ENCODE measurements at regions of chr21 and their contacts with region 1.

Region 1: GRCh38 chr21:38505654-38506515 is 7.6 kb upstream of the ERG start:
- DNase-seq: no peak
- ATAC-seq: peak; percentile 86
- H3K4me3 ChIP-seq: no peak overlapping the region
- H3K27ac ChIP-seq: no peak overlapping the region
- H3K4me1 ChIP-seq: no peaks in the 10 kb centered on the region
- H3K27me3 ChIP-seq: no peaks in the 10 kb centered on the region
- CTCF ChIP-seq: peak; percentile 55 to 65 (median 56)
- EP300 ChIP-seq: no peak
- POLR2A ChIP-seq: no peak
- RAD21 ChIP-seq: peak; percentile 65

Region 2: DNA sequence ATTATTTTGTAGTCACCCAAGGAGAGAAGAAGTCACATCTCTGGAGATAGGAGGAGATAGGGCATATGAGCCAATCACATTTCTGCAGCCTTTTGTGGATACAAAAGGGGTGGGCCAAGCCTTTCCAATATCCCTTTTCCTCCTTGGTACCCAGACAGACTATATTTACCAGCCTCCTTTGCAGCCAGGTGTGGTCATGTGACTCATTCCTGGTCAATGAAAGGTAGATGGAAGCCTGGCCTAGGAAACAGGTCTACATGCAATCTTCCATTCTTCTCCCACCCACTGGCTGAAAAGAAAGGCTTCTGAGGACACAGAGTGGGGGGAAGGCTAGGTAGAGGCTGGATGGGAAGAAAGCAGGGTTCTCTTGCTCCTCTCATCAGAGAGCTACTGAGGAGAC is 50.5 kb after region 1 on chr21:
- CTCF ChIA-PET with region 1: no interaction called
- POLR2A ChIA-PET with region 1: no interaction called
- RAD21 ChIA-PET with region 1: no interaction called
- SMC1A ChIA-PET with region 1: no interaction called
- in situ Hi-C with region 1: no loop called
- intact Hi-C with region 1: no loop called
- DNase-seq: no peak
- ATAC-seq: no peak
- H3K4me3 ChIP-seq: no peak overlapping the region
- H3K27ac ChIP-seq: no peak overlapping the region
- H3K4me1 ChIP-seq: no peaks in the 10 kb centered on the region
- H3K27me3 ChIP-seq: no peaks in the 10 kb centered on the region
- CTCF ChIP-seq: no peak
- EP300 ChIP-seq: no peak
- POLR2A ChIP-seq: no peak
- RAD21 ChIP-seq: no peak

Region 3: DNA sequence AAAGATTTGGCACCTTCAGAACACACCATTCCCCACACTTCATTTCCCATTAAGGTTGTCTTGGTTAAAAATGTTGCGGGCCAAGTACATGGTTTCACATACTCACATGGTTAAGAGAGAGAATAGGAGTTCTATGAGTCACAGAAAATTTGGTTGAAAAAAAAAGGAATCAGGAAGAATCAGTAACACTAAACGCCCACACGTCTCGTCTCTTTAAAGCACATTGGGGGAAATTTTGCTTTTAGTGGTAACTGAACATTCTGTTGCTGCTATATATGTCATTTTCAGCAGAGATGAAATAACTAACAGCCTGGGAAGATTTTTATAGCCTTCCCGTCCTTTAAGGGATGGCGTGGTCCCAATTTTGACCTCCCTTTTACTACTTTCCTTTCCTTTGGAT is 125.3 kb after region 1 on chr21:
- CTCF ChIA-PET with region 1: no interaction called
- POLR2A ChIA-PET with region 1: no interaction called
- RAD21 ChIA-PET with region 1: no interaction called
- SMC1A ChIA-PET with region 1: no interaction called
- in situ Hi-C with region 1: no loop called
- intact Hi-C with region 1: no loop called
- DNase-seq: no peak
- ATAC-seq: no peak
- H3K4me3 ChIP-seq: no peak overlapping the region
- H3K27ac ChIP-seq: no peak overlapping the region
- H3K4me1 ChIP-seq: no peaks in the 10 kb centered on the region
- H3K27me3 ChIP-seq: no peaks in the 10 kb centered on the region; a peak in 1 of 4 replicates
- CTCF ChIP-seq: no peak
- EP300 ChIP-seq: no peak
- POLR2A ChIP-seq: no peak
- RAD21 ChIP-seq: no peak

Region 4: GRCh38 chr21:38702196-38702595 is 196.3 kb after region 1 on chr21:
- CTCF ChIA-PET with region 1: no interaction called
- POLR2A ChIA-PET with region 1: no interaction called
- RAD21 ChIA-PET with region 1: no interaction called
- SMC1A ChIA-PET with region 1: no interaction called
- in situ Hi-C with region 1: no loop called
- intact Hi-C with region 1: loop called (anchors 10 kb)
- DNase-seq: no peak
- ATAC-seq: no peak
- H3K4me3 ChIP-seq: no peak overlapping the region
- H3K27ac ChIP-seq: no peak overlapping the region
- H3K4me1 ChIP-seq: no peaks in the 10 kb centered on the region
- H3K27me3 ChIP-seq: no peaks in the 10 kb centered on the region
- CTCF ChIP-seq: no peak
- EP300 ChIP-seq: no peak
- POLR2A ChIP-seq: no peak
- RAD21 ChIP-seq: no peak

Region 5: DNA sequence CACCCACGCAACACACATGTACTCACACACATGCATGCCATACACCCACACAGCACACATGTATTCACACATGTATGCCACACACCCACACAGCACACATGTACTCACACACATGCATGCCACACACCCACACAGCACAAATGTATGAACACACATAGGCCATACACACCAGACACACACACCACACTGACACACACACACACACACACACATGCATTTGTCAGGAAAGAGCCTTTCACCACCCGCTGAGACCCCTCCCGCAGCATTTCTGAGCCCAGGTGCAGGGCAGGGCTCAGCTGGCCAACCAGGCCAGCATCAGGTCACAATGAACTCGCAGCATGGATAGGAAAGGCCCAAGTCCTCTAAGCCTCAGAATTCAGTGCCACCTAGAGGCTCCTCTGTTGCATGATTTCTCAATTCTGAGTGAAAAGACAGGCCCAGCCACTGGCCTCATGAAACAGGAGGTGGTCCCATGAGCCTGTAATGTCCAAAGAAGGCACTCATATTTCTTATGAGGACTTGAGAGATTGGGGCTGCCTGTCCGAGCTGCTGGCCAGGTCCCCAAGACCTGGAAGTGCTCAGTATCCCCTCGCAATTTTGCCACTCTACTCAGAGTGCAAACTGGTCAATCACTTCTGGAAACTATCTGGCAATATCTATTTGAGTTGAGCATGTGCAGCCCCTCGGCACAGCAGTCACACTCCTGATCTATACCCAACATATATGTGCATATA is 620.0 kb after region 1 on chr21:
- CTCF ChIA-PET with region 1: no interaction called
- POLR2A ChIA-PET with region 1: no interaction called
- RAD21 ChIA-PET with region 1: no interaction called
- SMC1A ChIA-PET with region 1: no interaction called
- in situ Hi-C with region 1: loop called (anchors 10 kb)
- intact Hi-C with region 1: no loop called
- DNase-seq: no peak
- ATAC-seq: peak; percentile 81
- H3K4me3 ChIP-seq: no peak overlapping the region
- H3K27ac ChIP-seq: no peak overlapping the region
- H3K4me1 ChIP-seq: no peaks in the 10 kb centered on the region
- H3K27me3 ChIP-seq: no peaks in the 10 kb centered on the region
- CTCF ChIP-seq: peak; percentile 44 to 56 (median 53); a peak in 5 of 6 replicates
- EP300 ChIP-seq: no peak
- POLR2A ChIP-seq: no peak
- RAD21 ChIP-seq: peak; percentile 58

Measured in GM12878 (cell line).